BJ (cell line): ENCODE measurements at regions of chr1 and their contacts with region 1.

Region 1: DNA sequence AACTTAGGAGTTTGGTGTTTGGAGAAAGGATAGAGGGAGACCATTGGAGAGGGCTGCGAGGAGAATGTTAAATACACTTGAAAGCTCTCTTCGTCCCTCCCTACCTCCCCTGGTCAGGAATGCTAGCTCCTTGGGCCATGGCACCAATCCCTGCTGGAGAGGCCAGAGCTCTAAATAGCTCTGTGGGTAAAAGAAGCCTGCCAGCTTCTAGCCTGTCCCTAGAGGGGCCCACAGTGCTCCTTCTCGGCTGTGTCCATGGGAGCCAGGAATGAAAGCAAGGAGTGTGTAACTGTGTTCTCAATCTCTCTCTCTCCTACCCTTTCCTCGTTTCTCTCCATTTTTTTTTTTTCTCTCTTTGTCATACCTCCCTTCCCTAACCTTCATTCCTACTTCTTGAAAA is at the start of gene CCDC190:
- DNase-seq: no peak
- H3K4me3 ChIP-seq: no peak within 1 kb of the TSS
- H3K27me3 ChIP-seq: no peaks in the 10 kb centered on the region
- CTCF ChIP-seq: no peak
- polyA plus RNA-seq, gene CCDC190: 0.31 and 0.55 TPM in 2 replicates

Region 2: DNA sequence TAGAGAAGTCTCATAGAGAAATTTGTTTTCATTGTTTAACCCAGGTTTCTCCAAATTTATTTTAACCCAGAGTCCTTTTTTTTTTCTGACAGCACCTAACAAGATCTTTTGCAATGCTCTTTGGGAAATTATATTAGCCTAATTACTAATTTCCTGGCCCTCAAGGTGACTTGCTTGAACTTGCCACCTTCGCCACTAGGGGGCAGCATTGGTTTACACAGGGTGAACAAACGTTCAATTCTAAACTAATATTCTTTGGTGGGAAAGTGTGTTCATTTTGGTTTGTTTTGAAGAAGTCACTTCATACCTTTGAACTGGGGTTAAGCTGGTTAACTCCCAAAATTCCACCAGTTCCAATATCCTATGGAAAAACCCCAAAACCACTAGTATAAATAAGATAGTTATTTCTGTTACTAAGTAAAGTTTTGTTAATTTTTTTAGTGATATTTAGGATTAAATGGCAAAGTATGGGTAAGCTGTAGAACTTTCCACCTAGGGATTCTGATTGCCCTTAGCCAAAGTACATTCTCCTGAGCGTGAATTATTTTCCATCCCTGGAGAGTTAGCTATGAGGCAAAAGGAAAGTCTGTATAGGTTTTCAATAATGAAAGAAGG is 13.2 kb before region 1 on chr1:
- CTCF ChIA-PET with region 1: interaction called, 23 read pairs
- POLR2A ChIA-PET with region 1: no interaction called
- DNase-seq: no peak
- H3K4me3 ChIP-seq: no peak overlapping the region
- H3K27me3 ChIP-seq: no peaks in the 10 kb centered on the region
- CTCF ChIP-seq: peak; percentile 87

Region 3: DNA sequence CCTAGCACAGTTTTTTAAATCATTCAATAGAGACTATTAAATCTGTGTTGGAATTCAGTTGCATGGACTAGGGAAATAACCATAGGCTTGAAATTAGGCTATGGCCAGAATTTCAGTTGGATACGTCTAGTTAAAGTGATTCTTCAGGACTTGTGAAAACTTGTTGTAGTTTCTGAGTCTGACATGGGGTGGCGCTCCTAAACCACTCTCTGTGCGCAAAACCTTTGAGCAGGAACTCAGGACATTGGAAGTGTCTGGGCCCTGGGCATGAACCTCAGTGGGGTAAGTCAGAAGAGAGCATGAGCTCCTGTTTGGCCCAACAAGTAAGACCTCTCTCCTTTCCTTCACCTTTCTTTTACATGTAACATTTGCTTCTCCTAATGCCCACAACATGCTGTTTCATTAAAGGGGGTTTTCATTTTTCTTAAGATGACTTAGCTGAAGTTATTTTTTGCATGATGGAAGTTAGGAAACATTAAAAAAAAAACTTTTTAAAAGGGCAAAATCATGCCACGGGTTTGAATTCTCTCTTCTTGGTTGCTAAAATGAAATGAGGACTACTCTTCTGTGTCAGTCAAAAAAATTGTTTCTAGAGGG is 17.0 kb after region 1 on chr1:
- CTCF ChIA-PET with region 1: interaction called, 12 read pairs
- POLR2A ChIA-PET with region 1: no interaction called
- DNase-seq: no peak
- H3K4me3 ChIP-seq: no peak overlapping the region
- H3K27me3 ChIP-seq: no peaks in the 10 kb centered on the region
- CTCF ChIP-seq: peak; percentile 81

Region 4: DNA sequence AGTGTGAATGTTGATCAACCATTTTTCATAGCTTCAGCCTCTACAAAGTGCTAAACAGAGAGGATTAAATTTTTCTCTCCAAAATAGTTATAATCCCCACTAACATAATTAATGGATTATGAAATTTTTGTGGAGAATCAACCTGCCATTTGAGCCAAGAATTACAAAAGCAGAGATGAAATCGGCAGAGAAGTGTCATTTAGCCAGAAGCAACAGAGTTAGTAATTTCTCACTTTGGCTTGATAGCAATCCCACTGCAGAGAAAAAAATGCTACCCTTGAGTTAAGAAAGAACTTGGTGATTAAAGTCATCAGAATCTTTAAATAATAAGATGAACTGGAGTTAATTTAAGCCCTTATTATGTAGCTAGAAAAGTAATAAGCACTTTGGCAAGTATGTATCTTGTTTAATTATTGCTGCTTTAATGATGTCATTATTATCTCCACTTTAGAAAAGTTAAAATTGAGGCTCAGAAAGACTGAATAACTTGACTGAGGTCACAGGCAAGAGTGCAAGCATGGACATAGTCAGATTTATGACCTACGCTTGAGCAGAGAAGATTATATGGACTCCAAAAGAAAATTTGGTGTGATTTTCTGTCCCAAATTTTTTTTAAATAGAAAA is 245.4 kb after region 1 on chr1:
- CTCF ChIA-PET with region 1: no interaction called
- POLR2A ChIA-PET with region 1: no interaction called
- DNase-seq: no peak
- H3K4me3 ChIP-seq: no peak overlapping the region
- H3K27me3 ChIP-seq: no peaks in the 10 kb centered on the region
- CTCF ChIP-seq: no peak